ENCODE measurements at regions of chr3 and their contacts with region 1.

Region 1: GRCh38 chr3:131153505-131153904 is 126.8 kb downstream of the NEK11 start:
- DNase-seq: no peak
- H3K4me3 ChIP-seq: no peak overlapping the region
- H3K27ac ChIP-seq: no peak overlapping the region
- H3K4me1 ChIP-seq: no peaks in the 10 kb centered on the region
- H3K27me3 ChIP-seq: no peaks in the 10 kb centered on the region
- CTCF ChIP-seq: peak in 1 of 2 donors; percentile 36

Region 2: DNA sequence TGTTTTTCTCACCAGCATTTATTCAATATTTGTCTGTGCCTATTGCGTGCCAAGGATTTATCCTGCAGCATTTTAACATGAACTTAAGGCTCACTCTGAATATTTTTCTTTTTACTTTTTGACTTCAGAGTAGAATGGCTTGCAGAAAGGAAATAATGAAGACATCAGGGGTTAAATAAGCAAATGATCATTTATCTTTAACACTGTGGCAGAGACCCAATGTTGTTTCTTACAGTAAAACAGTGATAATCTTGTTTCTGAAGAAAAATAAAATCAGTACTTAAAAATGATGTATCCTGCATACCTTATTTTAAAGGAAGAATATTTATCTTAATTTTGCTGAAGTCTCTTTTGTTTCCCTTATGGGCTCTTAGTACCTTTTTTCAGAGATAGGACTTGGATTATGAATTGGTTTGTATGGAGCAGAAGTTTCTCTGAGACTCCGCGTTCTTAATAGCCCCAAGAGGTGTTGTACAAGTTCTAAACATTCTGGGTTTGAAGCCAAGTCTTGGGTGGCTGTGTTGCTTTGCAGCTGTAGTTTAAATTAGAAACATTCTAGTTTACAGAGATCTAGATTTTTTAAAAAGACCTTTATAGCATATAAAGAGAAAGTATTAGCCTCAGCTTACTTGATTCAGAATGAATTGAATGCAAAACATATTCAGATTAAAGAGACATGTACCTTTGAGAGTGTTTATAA is 596.0 kb before region 1 on chr3:
- CTCF ChIA-PET with region 1: no interaction called
- dilution Hi-C with region 1: no loop called
- in situ Hi-C with region 1: no loop called
- intact Hi-C with region 1: no loop called
- DNase-seq: no peak
- H3K4me3 ChIP-seq: no peak overlapping the region
- H3K27ac ChIP-seq: no peak overlapping the region
- H3K4me1 ChIP-seq: no peaks in the 10 kb centered on the region
- H3K27me3 ChIP-seq: no peaks in the 10 kb centered on the region
- CTCF ChIP-seq: no peak

Region 3: GRCh38 chr3:131107637-131108433 is 45.7 kb before region 1 on chr3:
- CTCF ChIA-PET with region 1: no interaction called
- dilution Hi-C with region 1: loop called (anchors 5 kb)
- in situ Hi-C with region 1: no loop called
- intact Hi-C with region 1: no loop called
- DNase-seq: no peak
- H3K4me3 ChIP-seq: no peak overlapping the region
- H3K27ac ChIP-seq: no peak overlapping the region
- H3K4me1 ChIP-seq: peaks cover 19% of the 10 kb centered on the region
- H3K27me3 ChIP-seq: no peaks in the 10 kb centered on the region
- CTCF ChIP-seq: no peak

Measured in mammary epithelial cell (primary cell).